OCI-LY7 (cell line): ENCODE measurements at regions of chr9 and their contacts with region 1.

Region 1: GRCh38 chr9:93003552-93004407 is 54.7 kb upstream of the SUSD3 start:
- DNase-seq: peak; percentile 77
- H3K4me3 ChIP-seq: no peak overlapping the region
- H3K27ac ChIP-seq: no peak overlapping the region
- H3K4me1 ChIP-seq: peaks cover 8% of the 10 kb centered on the region
- CTCF ChIP-seq: peak; percentile 88

Region 2: GRCh38 chr9:92954049-92954861 is 49.5 kb before region 1 on chr9:
- CTCF ChIA-PET with region 1: no interaction called
- POLR2A ChIA-PET with region 1: interaction called, 3 read pairs
- intact Hi-C with region 1: loop called (anchors 2 kb)
- DNase-seq: peak; percentile 24
- H3K4me3 ChIP-seq: no peak overlapping the region
- H3K27ac ChIP-seq: no peak overlapping the region
- H3K4me1 ChIP-seq: peaks cover 9% of the 10 kb centered on the region
- CTCF ChIP-seq: no peak

Region 3: DNA sequence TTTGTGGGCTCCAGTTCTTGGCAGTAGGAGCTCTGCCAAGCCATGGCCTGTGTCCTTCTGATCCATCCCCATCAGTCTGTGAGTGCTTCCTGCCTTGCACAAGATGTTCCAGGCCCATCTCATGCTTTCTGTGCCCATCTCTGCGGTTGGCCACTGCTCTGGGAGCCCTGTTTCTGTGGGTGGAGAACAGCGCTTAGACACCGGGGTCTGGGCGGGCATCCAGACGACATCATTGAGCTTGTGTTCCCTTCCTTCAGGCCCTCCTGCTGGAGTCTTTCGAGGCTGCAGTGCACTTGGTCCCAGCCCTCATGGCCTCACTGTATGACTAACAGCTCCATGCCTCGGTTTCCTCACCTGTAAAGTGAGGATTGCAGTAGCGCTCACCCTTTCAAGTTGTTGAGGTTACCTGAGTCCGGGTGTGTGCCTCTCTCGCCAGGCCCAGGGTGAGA is 77.3 kb after region 1 on chr9:
- CTCF ChIA-PET with region 1: no interaction called
- POLR2A ChIA-PET with region 1: no interaction called
- intact Hi-C with region 1: no loop called
- DNase-seq: no peak
- H3K4me3 ChIP-seq: no peak overlapping the region
- H3K27ac ChIP-seq: no peak overlapping the region
- H3K4me1 ChIP-seq: no peaks in the 10 kb centered on the region
- CTCF ChIP-seq: no peak

Region 4: DNA sequence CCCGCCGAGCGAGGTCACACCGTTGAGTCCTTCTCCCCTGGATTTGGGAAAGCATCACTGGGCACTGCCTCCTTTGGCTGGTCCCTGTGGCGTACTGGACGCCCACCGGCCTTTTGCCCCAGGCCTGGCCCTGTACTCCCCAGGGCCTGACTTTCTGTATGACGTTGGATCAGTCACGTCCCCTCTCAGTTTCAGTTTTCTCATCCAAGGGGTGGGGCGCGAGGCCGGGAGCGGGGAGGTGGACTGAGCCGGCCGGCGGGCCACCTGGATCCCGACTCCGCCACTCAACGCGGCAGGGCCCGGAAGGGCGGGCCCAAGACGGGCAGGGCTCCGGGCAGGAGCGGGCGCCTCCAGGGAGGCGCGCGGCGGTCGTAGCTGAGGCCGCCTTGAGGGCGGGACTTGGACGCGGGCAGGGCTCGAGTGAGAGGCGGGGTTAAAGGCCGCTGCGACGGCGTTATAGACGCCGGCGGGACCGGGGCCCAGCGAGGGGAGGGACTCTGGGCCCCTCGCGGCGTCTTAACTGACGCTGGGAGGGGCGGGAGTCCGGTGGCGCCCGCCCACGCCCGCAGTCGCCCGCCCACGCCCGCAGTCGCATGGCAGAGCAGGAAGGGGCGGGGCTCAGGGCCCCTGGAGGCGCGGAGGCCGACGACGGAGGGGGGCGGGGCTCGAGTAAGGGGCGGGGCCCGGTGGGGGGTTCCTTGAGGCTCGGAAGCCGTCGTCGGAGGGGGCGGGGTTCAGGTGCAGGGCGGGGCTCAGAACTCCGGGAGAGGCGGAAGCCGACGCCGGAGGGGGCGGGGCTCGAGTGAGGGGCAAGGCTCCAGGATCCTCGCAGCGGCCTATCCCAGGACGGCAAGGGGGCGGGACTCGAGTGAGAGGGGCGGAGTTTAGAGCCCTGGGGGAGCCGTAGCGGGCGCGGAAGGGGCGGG is 91.7 kb after region 1 on chr9:
- CTCF ChIA-PET with region 1: no interaction called
- POLR2A ChIA-PET with region 1: interaction called, 6 read pairs
- intact Hi-C with region 1: loop called (anchors 2 kb)
- DNase-seq: peak; percentile 99
- H3K4me3 ChIP-seq: peak overlapping the region; percentile 91
- H3K27ac ChIP-seq: peak overlapping the region; percentile 87
- H3K4me1 ChIP-seq: peaks cover 60% of the 10 kb centered on the region
- CTCF ChIP-seq: no peak